SK-N-SH (cell line): ENCODE measurements at regions of chr14 and their contacts with region 1.

Region 1: DNA sequence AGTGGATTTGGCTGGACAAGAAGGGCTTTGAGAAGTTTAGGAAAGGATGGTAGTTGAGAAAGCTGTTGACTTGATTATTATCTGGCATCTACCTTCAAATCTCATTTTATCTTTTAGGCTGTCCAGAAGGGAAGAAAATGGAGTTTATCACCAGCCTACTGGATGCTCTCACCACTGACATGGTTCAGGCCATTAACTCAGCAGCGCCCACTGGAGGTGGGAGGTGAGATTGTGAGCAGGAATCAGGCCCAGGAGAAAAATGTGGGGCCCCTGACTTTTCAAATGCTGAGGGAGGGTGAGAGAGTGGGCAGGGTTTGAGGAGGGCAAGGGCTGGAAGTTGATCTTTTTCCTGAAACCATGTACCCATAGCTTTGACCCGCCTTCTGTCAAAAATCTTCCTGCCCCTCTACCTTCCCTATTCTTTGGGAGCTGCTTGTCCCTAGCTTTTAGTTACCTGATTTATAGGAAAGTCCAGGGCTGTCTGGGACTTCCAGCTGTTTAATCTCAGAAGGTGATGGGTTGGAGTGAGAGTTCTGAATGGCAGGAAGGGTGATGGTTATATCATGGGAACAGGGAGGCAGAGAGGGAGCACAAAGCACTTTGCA is 134.2 kb downstream of the SMOC1 start:
- DNase-seq: peak; percentile 52
- H3K4me3 ChIP-seq: no peak overlapping the region; a peak in 1 of 4 replicates
- H3K27ac ChIP-seq: no peak overlapping the region
- H3K4me1 ChIP-seq: peaks cover 0 to 14% of the 10 kb centered on the region in 2 experiments; a peak in 1 of 4 replicates
- H3K27me3 ChIP-seq: no peaks in the 10 kb centered on the region; the same call in 1 of the 2 replicates
- CTCF ChIP-seq: peak; percentile 53
- EP300 ChIP-seq: no peak
- RAD21 ChIP-seq: peak; percentile 50

Region 2: DNA sequence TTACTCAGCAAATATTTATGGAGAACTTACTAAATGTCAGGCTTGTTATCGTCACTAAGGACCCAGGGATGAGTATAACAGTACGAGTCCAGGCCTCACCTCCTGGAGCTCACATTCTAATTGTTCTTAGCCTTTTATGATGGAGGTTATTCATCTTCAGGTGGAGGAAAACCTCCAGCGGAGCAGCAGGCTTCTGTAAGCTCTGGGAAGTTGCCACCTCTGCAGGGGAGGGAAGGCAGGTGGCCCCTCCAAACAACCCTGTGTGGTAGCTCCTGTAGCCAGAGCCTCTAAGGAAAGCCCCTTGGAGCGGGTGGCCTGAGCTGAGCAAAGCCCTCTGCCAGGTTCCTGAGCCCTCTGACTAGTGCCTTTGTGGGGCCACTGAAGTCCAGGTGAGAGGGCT is 30.1 kb before region 1 on chr14:
- CTCF ChIA-PET with region 1: interaction called, 10 read pairs
- POLR2A ChIA-PET with region 1: no interaction called
- DNase-seq: no peak
- H3K4me3 ChIP-seq: no peak overlapping the region
- H3K27ac ChIP-seq: no peak overlapping the region
- H3K4me1 ChIP-seq: no peaks in the 10 kb centered on the region
- H3K27me3 ChIP-seq: no peaks in the 10 kb centered on the region
- CTCF ChIP-seq: no peak
- EP300 ChIP-seq: no peak
- RAD21 ChIP-seq: no peak

Region 3: GRCh38 chr14:70000601-70001000 is 12.8 kb before region 1 on chr14:
- CTCF ChIA-PET with region 1: interaction called, 10 read pairs
- POLR2A ChIA-PET with region 1: no interaction called
- DNase-seq: no peak
- H3K4me3 ChIP-seq: no peak overlapping the region
- H3K27ac ChIP-seq: no peak overlapping the region
- H3K4me1 ChIP-seq: no peaks in the 10 kb centered on the region; a peak in 1 of 4 replicates
- H3K27me3 ChIP-seq: no peaks in the 10 kb centered on the region
- CTCF ChIP-seq: no peak
- EP300 ChIP-seq: no peak
- RAD21 ChIP-seq: no peak